ENCODE measurements at regions of chr17 and their contacts with region 1.

Region 1: GRCh38 chr17:79707931-79708891 is 22.5 kb upstream of the ENPP7 start:
- DNase-seq: peak; percentile 76
- CTCF ChIP-seq: peak; percentile 81

Region 2: GRCh38 chr17:79695797-79696609 is 12.2 kb before region 1 on chr17:
- CTCF ChIA-PET with region 1: interaction called, 17 read pairs
- POLR2A ChIA-PET with region 1: no interaction called
- DNase-seq: no peak
- CTCF ChIP-seq: no peak